Activated B cell treated with CpG ODN at 0.5 μM for 24 hours (primary cell): ENCODE measurements at regions of chr16 and their contacts with region 1.

Region 1: GRCh38 chr16:84504420-84505248 is at the start of gene MEAK7:
- DNase-seq: peak; percentile 97
- ATAC-seq: peak; percentile 96
- H3K4me3 Mint-ChIP-seq: peak within 1 kb of the TSS; percentile 88
- H3K27ac Mint-ChIP-seq: peak within 1 kb of the TSS; percentile 91
- H3K4me1 Mint-ChIP-seq: peaks cover 56% of the 10 kb centered on the region
- H3K27me3 Mint-ChIP-seq: no peaks in the 10 kb centered on the region
- CTCF ChIP-seq: no peak
- total RNA-seq, gene MEAK7: 9.8 and 15.0 TPM in 2 replicates

Region 2: DNA sequence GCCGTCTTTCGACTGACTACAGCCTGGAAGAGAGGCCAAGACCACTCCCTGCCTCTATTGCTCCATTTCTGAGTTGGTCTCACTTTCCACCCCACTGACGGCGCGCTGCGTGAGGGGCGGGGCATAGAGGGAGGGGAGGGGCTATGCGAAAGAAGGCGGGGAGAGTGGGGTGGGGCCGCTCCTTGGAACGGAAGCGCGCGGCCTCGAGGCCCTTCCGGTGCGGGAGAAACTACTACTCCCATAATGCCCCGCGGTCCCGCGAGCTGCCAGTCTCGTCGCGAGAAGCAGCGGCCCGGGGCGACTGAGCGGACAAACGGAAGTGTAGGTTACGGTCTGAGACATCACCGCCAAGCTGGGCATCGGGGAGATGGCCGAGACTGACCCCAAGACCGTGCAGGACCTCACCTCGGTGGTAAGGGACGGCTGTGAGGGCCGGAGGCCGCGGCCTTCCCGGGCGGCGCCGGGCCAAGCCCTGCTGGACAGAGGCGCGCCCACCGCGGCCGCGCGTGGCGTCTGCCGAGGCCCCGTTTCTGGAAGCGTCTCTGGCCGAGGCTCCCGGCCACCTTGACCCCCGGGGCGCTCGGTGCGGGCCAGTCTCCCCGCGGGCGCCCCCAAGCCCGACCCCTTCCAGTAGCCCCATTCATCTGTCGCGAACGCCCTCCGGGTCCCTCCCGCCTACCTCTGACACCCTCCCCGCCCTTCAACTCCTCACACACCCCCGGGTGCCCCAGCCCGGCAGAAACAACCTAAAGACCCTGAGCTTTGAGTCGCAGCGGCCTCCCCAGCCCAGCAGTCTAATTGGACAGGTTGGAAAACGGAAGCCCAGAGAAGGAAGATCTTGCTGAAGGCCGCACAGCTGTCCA is 696.7 kb before region 1 on chr16 and contains the start of gene HSBP1:
- CTCF ChIA-PET with region 1: no interaction called
- POLR2A ChIA-PET with region 1: no interaction called
- intact Hi-C with region 1: loop called (anchors 2 kb)
- DNase-seq: peak; percentile 87
- ATAC-seq: peak; percentile 95
- H3K4me3 Mint-ChIP-seq: peak within 1 kb of the TSS; percentile 97
- H3K27ac Mint-ChIP-seq: peak within 1 kb of the TSS; percentile 94
- H3K4me1 Mint-ChIP-seq: peaks cover 64% of the 10 kb centered on the region
- H3K27me3 Mint-ChIP-seq: no peaks in the 10 kb centered on the region
- CTCF ChIP-seq: no peak
- total RNA-seq, gene HSBP1: 49.8 and 54.0 TPM in 2 replicates

Region 3: GRCh38 chr16:84144859-84145639 is 359.6 kb before region 1 on chr16 and contains the starts of genes DNAAF1 and HSDL1:
- CTCF ChIA-PET with region 1: no interaction called
- POLR2A ChIA-PET with region 1: interaction called, 3 read pairs
- intact Hi-C with region 1: loop called (anchors 5 kb)
- DNase-seq: peak; percentile 97
- ATAC-seq: peak; percentile 86
- H3K4me3 Mint-ChIP-seq: peak within 1 kb of the TSS; percentile 93
- H3K27ac Mint-ChIP-seq: peak within 1 kb of the TSS; percentile 77
- H3K4me1 Mint-ChIP-seq: peaks cover 12% of the 10 kb centered on the region
- H3K27me3 Mint-ChIP-seq: peaks cover 3% of the 10 kb centered on the region
- CTCF ChIP-seq: no peak
- total RNA-seq, gene DNAAF1: not detected in 2 replicates
- total RNA-seq, gene HSDL1: 13.1 and 15.3 TPM in 2 replicates

Region 4: GRCh38 chr16:84550092-84550491 is 45.5 kb after region 1 on chr16:
- CTCF ChIA-PET with region 1: no interaction called
- POLR2A ChIA-PET with region 1: no interaction called
- intact Hi-C with region 1: no loop called
- DNase-seq: no peak
- ATAC-seq: no peak
- H3K4me3 Mint-ChIP-seq: no peak overlapping the region
- H3K27ac Mint-ChIP-seq: no peak overlapping the region
- H3K4me1 Mint-ChIP-seq: peaks cover 13% of the 10 kb centered on the region
- H3K27me3 Mint-ChIP-seq: no peaks in the 10 kb centered on the region
- CTCF ChIP-seq: no peak

Region 5: GRCh38 chr16:84599521-84600202 is 95.0 kb after region 1 on chr16:
- CTCF ChIA-PET with region 1: interaction called, 4 read pairs
- POLR2A ChIA-PET with region 1: interaction called, 19 read pairs
- intact Hi-C with region 1: no loop called
- DNase-seq: peak; percentile 55
- ATAC-seq: peak; percentile 40
- H3K4me3 Mint-ChIP-seq: peak overlapping the region; percentile 82
- H3K27ac Mint-ChIP-seq: peak overlapping the region; percentile 97
- H3K4me1 Mint-ChIP-seq: peaks cover 94% of the 10 kb centered on the region
- H3K27me3 Mint-ChIP-seq: no peaks in the 10 kb centered on the region
- CTCF ChIP-seq: no peak

Region 6: DNA sequence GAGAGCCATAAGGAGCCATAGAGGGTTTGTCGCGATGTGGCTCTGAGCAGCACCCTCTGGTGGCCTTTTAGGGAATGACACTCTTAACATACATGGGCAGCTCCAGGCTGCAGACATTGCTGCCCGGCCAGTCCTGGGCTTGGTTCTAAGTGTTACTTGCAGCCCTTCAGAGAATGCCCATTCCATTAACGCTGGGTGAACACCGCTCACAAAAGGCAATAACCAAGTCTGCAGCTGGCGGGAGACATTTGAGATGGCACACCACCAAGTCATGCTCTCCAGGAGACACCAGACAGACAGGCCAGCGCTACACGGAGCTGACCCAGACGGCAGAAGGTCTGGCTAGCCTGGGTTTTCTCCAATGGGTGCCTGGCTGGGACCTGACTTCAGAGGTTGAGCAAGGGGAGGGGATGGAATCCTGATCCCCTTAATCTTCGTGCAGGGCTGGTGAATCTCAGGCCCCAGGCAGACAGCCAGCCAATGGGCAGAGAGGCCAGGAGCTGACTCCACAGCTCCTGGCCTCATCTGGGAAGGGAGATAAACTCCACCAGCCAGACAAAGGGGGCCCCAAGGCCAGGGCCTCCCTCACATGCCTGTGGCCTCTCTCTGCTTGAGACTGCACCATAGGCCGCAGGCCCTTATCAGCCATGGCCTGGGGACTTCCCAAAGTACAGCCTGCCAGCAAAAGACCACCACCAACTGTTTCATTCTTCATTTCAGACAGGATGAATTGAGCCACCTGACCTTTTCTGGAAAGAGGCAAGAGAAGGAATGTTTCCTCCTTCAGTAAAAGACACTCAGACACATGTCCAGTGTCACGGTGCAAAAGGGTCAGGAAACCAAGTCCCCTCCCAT is 447.9 kb after region 1 on chr16:
- CTCF ChIA-PET with region 1: no interaction called
- POLR2A ChIA-PET with region 1: no interaction called
- intact Hi-C with region 1: loop called (anchors 5 kb)
- DNase-seq: peak; percentile 39
- ATAC-seq: peak; percentile 93
- H3K4me3 Mint-ChIP-seq: no peak overlapping the region
- H3K27ac Mint-ChIP-seq: no peak overlapping the region
- H3K4me1 Mint-ChIP-seq: peaks cover 5% of the 10 kb centered on the region
- H3K27me3 Mint-ChIP-seq: peaks cover 12% of the 10 kb centered on the region
- CTCF ChIP-seq: peak; percentile 40